A673 (cell line): ENCODE measurements at regions of chr12 and their contacts with region 1.

Region 1: GRCh38 chr12:120228291-120229070 is 27.6 kb upstream of the RPLP0 start:
- DNase-seq: peak; percentile 91
- H3K4me3 ChIP-seq: no peak overlapping the region
- H3K27ac ChIP-seq: peak overlapping the region; percentile 82
- H3K4me1 ChIP-seq: peaks cover 77% of the 10 kb centered on the region
- H3K27me3 ChIP-seq: no peaks in the 10 kb centered on the region
- CTCF ChIP-seq: peak; percentile 95

Region 2: GRCh38 chr12:119956018-119956417 is 272.5 kb before region 1 on chr12:
- CTCF ChIA-PET with region 1: no interaction called
- POLR2A ChIA-PET with region 1: no interaction called
- intact Hi-C with region 1: no loop called
- DNase-seq: no peak
- H3K4me3 ChIP-seq: no peak overlapping the region
- H3K27ac ChIP-seq: no peak overlapping the region
- H3K4me1 ChIP-seq: no peaks in the 10 kb centered on the region
- H3K27me3 ChIP-seq: no peaks in the 10 kb centered on the region
- CTCF ChIP-seq: no peak

Region 3: GRCh38 chr12:120199595-120200306 is 28.7 kb before region 1 on chr12:
- CTCF ChIA-PET with region 1: interaction called, 11 read pairs
- POLR2A ChIA-PET with region 1: interaction called, 16 read pairs
- intact Hi-C with region 1: no loop called
- DNase-seq: no peak
- H3K4me3 ChIP-seq: peak overlapping the region; percentile 97
- H3K27ac ChIP-seq: peak overlapping the region; percentile 95
- H3K4me1 ChIP-seq: peaks cover 22% of the 10 kb centered on the region
- H3K27me3 ChIP-seq: no peaks in the 10 kb centered on the region
- CTCF ChIP-seq: no peak

Region 4: DNA sequence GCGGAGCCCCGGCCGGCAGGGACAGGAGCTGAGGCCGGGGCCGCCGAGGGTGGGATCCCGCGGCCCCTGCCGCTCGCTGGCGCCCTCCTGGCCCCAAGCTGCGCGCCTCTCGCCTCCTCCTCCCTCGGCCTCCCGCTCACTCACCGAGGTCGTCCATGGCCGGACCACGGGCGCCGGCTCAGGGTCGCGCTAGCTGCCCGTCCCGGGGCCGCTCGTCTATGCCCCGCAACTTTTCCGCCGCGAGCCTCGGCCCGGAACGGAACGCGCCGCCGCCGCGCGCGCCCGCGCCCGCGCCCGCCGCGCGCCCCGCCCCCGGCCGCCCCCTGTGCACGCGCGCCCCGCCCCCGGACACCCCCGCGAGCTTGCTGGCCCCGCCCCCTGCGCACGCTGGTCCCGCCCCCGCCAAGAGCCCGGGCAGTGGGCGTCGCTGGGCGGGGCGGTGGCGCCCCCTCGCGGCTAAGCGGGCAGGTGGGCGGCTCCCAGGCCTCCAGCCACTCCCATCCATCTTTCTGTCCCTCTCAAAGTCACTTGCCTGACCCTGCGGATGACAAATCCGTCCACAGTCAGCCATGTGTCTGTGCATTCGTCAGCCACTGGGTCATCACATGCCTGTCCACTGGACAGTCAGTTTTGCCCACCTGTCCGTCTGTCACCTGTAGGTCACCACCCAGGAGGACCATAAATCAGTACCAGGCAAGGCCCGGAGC is 37.1 kb after region 1 on chr12 and contains the start of gene PXN:
- CTCF ChIA-PET with region 1: interaction called, 141 read pairs
- POLR2A ChIA-PET with region 1: no interaction called
- intact Hi-C with region 1: loop called (anchors 1 kb)
- DNase-seq: peak; percentile 86
- H3K4me3 ChIP-seq: peak within 1 kb of the TSS; percentile 80
- H3K27ac ChIP-seq: peak within 1 kb of the TSS; percentile 71
- H3K4me1 ChIP-seq: peaks cover 28% of the 10 kb centered on the region
- H3K27me3 ChIP-seq: no peaks in the 10 kb centered on the region
- CTCF ChIP-seq: peak; percentile 74
- total RNA-seq, gene PXN: 110 and 127 TPM in 2 replicates

Region 5: DNA sequence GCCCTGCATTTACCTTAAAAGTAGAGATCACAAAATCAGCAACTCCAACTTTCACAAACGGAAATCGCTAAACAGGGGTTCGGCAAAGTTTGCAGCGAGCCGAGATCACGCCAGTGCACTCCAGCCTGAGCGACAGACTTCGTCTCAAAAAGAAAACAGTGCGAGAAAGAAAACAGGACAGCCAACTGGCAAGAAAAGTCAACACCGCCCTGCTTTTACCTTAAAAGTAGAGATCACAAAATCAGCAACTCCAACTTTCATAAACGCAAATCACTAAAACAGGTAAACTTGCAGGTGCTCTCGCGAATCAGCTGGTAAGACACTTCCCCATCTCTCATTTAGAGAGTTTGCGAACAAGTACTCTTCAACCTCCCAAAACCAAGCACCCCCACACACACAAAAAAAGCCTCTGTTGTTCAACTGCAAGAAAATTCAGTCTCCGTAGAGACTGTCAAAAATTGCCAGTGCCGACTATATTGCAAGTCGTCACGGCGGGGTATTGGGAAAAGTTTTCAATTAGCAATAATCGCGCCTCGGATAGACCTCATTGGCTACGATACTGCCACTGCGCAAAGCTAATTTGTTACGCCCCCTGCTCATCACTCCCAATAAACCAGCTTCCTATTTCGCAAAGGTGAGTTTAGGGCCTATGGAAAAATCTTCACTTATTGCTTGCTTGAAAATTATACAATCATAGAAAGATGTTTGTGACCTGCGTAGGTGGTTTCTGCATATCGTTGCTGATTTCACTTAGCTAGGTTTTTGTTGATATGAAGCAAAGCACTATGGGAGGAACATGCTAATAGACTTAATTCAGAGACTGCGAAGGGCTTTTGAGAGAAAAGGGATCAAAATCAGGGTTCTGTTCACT is 64.4 kb after region 1 on chr12 and contains the start of gene RNU4-1:
- CTCF ChIA-PET with region 1: interaction called, 23 read pairs
- POLR2A ChIA-PET with region 1: interaction called, 21 read pairs
- intact Hi-C with region 1: loop called (anchors 1 kb)
- DNase-seq: peak; percentile 98
- H3K4me3 ChIP-seq: peak within 1 kb of the TSS; percentile 54
- H3K27ac ChIP-seq: peak within 1 kb of the TSS; percentile 100
- H3K4me1 ChIP-seq: peaks cover 11% of the 10 kb centered on the region
- H3K27me3 ChIP-seq: no peaks in the 10 kb centered on the region
- CTCF ChIP-seq: no peak
- total RNA-seq, gene RNU4-1: 1,130 and 1,293 TPM in 2 replicates

Region 6: GRCh38 chr12:120437754-120438494 is 209.4 kb after region 1 on chr12 and contains the start of gene COX6A1:
- CTCF ChIA-PET with region 1: no interaction called
- POLR2A ChIA-PET with region 1: no interaction called
- intact Hi-C with region 1: loop called (anchors 10 kb)
- DNase-seq: peak; percentile 99
- H3K4me3 ChIP-seq: peak within 1 kb of the TSS; percentile 74
- H3K27ac ChIP-seq: peak within 1 kb of the TSS; percentile 69
- H3K4me1 ChIP-seq: peaks cover 12% of the 10 kb centered on the region
- H3K27me3 ChIP-seq: no peaks in the 10 kb centered on the region
- CTCF ChIP-seq: no peak
- total RNA-seq, gene COX6A1: 435 and 460 TPM in 2 replicates

Region 7: GRCh38 chr12:120598674-120599463 is 370.4 kb after region 1 on chr12:
- CTCF ChIA-PET with region 1: interaction called, 11 read pairs
- POLR2A ChIA-PET with region 1: no interaction called
- intact Hi-C with region 1: no loop called
- DNase-seq: no peak
- H3K4me3 ChIP-seq: no peak overlapping the region
- H3K27ac ChIP-seq: no peak overlapping the region
- H3K4me1 ChIP-seq: no peaks in the 10 kb centered on the region
- H3K27me3 ChIP-seq: no peaks in the 10 kb centered on the region
- CTCF ChIP-seq: no peak

Region 8: GRCh38 chr12:121383601-121384021 is 1155.1 kb after region 1 on chr12:
- CTCF ChIA-PET with region 1: interaction called, 15 read pairs
- POLR2A ChIA-PET with region 1: no interaction called
- intact Hi-C with region 1: no loop called
- DNase-seq: no peak
- H3K4me3 ChIP-seq: no peak overlapping the region
- H3K27ac ChIP-seq: no peak overlapping the region
- H3K4me1 ChIP-seq: no peaks in the 10 kb centered on the region
- H3K27me3 ChIP-seq: no peaks in the 10 kb centered on the region
- CTCF ChIP-seq: 0 out of 2 replicates have a peak, but pooled peaks have one; percentile 19